Naive thymus-derived CD4-positive, alpha-beta T cell (primary cell): ENCODE measurements at regions of chr11 and their contacts with region 1.

Region 1: DNA sequence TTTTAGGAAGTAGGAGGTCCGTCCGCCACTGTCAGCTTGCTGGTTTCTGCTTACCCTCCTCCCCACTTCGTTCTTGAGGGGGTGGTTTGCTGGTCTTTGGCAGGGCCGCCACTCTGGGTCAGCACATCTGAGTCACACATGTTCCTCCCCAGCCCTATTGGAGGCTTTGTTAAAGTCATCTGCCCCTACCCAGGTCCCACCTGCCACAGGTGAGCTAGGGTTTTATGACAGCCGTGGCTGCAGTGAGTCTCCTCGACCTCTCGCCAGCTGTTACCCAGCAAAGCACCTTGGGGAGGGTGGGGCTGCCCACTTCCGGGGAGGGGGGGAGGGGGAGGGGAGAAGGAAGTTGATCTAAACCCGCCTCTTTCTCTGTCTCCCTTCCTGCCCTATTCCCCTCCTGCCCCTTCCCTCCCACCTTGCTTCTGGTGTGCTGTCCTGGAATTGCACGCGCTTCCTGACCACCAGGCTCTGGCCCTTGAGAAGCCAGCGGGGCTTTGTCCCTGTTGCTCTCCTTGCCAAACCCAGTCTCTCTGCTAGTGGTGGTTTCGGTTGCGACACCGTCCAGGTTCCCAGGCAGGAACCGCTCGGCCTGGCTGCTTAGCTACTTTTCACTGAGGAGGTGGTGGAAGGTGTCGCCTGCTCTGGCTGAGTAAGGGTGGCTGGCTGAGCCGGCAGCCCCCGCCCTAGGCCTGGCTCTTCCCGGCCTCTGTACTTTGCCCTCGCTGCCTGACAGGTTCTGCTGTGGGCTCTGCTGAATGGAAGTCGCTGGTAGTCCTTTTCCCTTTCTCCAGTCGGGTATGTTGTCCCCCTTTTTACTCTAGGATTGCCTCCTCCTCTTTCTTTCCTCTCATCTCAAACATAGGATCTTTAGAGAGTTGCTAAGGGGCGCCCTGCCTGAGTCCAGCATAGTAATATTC is 28.5 kb downstream of the RCOR2 start:
- DNase-seq: peak; percentile 30 to 75 (median 72)
- ATAC-seq: peak; percentile 89
- H3K4me3 ChIP-seq: peak overlapping the region; percentile 80
- H3K4me3 Mint-ChIP-seq: peak overlapping the region; percentile 89 to 98 (median 95)
- H3K27ac ChIP-seq: peak overlapping the region; percentile 78
- H3K27ac Mint-ChIP-seq: peak overlapping the region; percentile 85 to 98 (median 94)
- H3K4me1 ChIP-seq: peaks cover 49 to 65% of the 10 kb centered on the region in 2 donors
- H3K4me1 Mint-ChIP-seq: peaks cover 58 to 86% (median 82%) of the 10 kb centered on the region in 7 donors
- H3K27me3 ChIP-seq: no peaks in the 10 kb centered on the region
- H3K27me3 Mint-ChIP-seq: no peaks in the 10 kb centered on the region

Region 2: DNA sequence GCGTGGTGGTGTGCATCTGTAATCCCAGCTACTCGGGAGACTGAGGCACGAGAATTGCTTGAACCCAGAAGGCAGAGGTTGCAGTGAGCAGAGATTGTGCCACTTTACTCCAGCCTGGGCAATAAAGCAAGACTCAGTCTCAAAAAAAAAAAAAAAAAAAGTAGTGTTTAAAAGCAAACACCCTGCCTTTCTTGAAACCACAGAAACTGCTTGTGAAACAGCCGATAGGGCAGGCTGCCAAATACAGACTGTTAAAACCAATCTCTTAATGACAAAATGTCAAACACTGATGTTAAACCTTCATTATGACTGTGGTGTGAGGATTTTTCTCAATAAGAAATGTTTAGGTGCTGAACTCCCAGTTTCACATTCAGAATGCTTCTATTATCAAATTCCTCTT is 22.2 kb before region 1 on chr11:
- CTCF ChIA-PET with region 1: interaction called, 5 read pairs
- POLR2A ChIA-PET with region 1: interaction called, 23 read pairs
- intact Hi-C with region 1: loop called in 1 of 2 experiments (anchors 1 kb)
- DNase-seq: peak; percentile 29 to 87 (median 80)
- ATAC-seq: peak; percentile 83
- H3K4me3 ChIP-seq: no peak overlapping the region
- H3K4me3 Mint-ChIP-seq: peak overlapping the region; percentile 56 to 81 (median 75)
- H3K27ac ChIP-seq: peak overlapping the region; percentile 22
- H3K27ac Mint-ChIP-seq: peak overlapping the region; percentile 63 to 94 (median 83)
- H3K4me1 ChIP-seq: peaks cover 73% of the 10 kb centered on the region in 2 donors
- H3K4me1 Mint-ChIP-seq: peaks cover 69 to 85% (median 75%) of the 10 kb centered on the region in 7 donors
- H3K27me3 ChIP-seq: no peaks in the 10 kb centered on the region
- H3K27me3 Mint-ChIP-seq: no peaks in the 10 kb centered on the region

Region 3: GRCh38 chr11:63871962-63872799 is 16.2 kb before region 1 on chr11:
- CTCF ChIA-PET with region 1: interaction called, 13 read pairs
- POLR2A ChIA-PET with region 1: interaction called, 51 read pairs
- intact Hi-C with region 1: loop called in 1 of 2 experiments (anchors 1 kb)
- DNase-seq: peak in 3 of 9 donors; percentile 11 to 44 (median 23)
- ATAC-seq: peak; percentile 96
- H3K4me3 ChIP-seq: no peak overlapping the region
- H3K4me3 Mint-ChIP-seq: peak overlapping the region; percentile 45 to 72 (median 62)
- H3K27ac ChIP-seq: no peak overlapping the region
- H3K27ac Mint-ChIP-seq: peak overlapping the region in 7 of 9 donors; percentile 8 to 70 (median 41)
- H3K4me1 ChIP-seq: peaks cover 56 to 62% of the 10 kb centered on the region in 2 donors
- H3K4me1 Mint-ChIP-seq: peaks cover 58 to 88% (median 83%) of the 10 kb centered on the region in 7 donors
- H3K27me3 ChIP-seq: no peaks in the 10 kb centered on the region
- H3K27me3 Mint-ChIP-seq: no peaks in the 10 kb centered on the region

Region 4: GRCh38 chr11:63916837-63917691 is 28.6 kb after region 1 on chr11 and contains the start of gene RCOR2:
- CTCF ChIA-PET with region 1: no interaction called
- POLR2A ChIA-PET with region 1: interaction called, 3 read pairs
- intact Hi-C with region 1: loop called in 1 of 2 experiments (anchors 1 kb)
- DNase-seq: peak; percentile 26 to 62 (median 54)
- ATAC-seq: peak; percentile 69
- H3K4me3 ChIP-seq: peak within 1 kb of the TSS; percentile 62
- H3K4me3 Mint-ChIP-seq: peak within 1 kb of the TSS; percentile 73 to 91 (median 83)
- H3K27ac ChIP-seq: no peak within 1 kb of the TSS
- H3K27ac Mint-ChIP-seq: peak within 1 kb of the TSS in 3 of 9 donors; percentile 36 to 64 (median 42)
- H3K4me1 ChIP-seq: peaks cover 8 to 20% of the 10 kb centered on the region in 2 donors
- H3K4me1 Mint-ChIP-seq: peaks cover 0 to 18% (median 15%) of the 10 kb centered on the region in 7 donors
- H3K27me3 ChIP-seq: no peaks in the 10 kb centered on the region
- H3K27me3 Mint-ChIP-seq: peaks cover 0 to 22% (median 0%) of the 10 kb centered on the region in 5 donors
- total RNA-seq, gene RCOR2: 0.07 TPM in 1 of 5 experiments, not detected in the others

Region 5: DNA sequence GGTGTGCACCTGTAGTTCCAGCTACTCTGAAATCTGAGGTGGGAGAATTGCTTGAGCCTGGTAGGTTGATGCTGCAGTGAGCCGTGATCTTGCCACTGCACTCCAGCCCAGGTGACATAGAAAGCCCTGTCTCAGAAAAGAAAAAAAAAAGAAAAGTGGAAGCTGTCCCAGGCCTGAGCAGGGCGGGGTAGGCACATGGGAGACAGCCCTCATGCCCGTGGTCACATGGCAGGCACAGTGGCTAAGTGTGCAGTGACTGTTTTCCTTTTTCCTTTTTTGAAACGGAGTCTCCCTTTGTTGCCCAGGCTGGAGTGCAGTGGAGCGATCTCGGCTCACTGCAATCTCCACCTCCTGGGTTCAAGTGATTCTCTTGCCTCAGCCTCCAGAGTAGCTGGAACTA is 105.6 kb after region 1 on chr11:
- CTCF ChIA-PET with region 1: no interaction called
- POLR2A ChIA-PET with region 1: no interaction called
- intact Hi-C with region 1: no loop called
- DNase-seq: no peak
- ATAC-seq: peak; percentile 30
- H3K4me3 ChIP-seq: no peak overlapping the region
- H3K4me3 Mint-ChIP-seq: no peak overlapping the region
- H3K27ac ChIP-seq: no peak overlapping the region
- H3K27ac Mint-ChIP-seq: no peak overlapping the region
- H3K4me1 ChIP-seq: no peaks in the 10 kb centered on the region
- H3K4me1 Mint-ChIP-seq: peaks cover 9 to 28% (median 15%) of the 10 kb centered on the region in 7 donors
- H3K27me3 ChIP-seq: no peaks in the 10 kb centered on the region
- H3K27me3 Mint-ChIP-seq: no peaks in the 10 kb centered on the region

Region 6: DNA sequence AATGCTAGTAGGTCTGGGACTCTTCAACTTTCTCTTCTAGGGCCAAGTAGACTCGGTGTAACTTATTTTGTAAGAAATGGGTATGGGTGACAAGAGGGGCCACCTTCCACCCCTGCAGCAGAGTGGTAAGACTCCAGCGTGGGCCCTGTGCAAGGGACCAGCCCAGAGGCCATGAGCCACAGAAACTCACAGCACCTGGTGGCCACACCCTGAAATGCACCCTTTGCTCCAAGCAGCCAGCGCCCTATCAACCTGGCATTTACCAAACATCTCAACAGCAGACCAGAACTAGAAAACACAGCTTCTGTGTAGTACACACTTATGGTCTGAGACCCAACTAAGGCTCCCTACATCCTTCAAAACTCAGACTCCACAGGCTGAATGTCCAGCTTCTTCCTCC is 1189.7 kb after region 1 on chr11:
- CTCF ChIA-PET with region 1: no interaction called
- POLR2A ChIA-PET with region 1: no interaction called
- intact Hi-C with region 1: no loop called
- DNase-seq: peak; percentile 47 to 71 (median 64)
- ATAC-seq: peak; percentile 97
- H3K4me3 ChIP-seq: no peak overlapping the region
- H3K4me3 Mint-ChIP-seq: peak overlapping the region in 1 of 10 donors; percentile 48
- H3K27ac ChIP-seq: no peak overlapping the region
- H3K27ac Mint-ChIP-seq: peak overlapping the region; percentile 9 to 83 (median 63)
- H3K4me1 ChIP-seq: no peaks in the 10 kb centered on the region
- H3K4me1 Mint-ChIP-seq: peaks cover 3 to 48% (median 7%) of the 10 kb centered on the region in 7 donors
- H3K27me3 ChIP-seq: no peaks in the 10 kb centered on the region
- H3K27me3 Mint-ChIP-seq: no peaks in the 10 kb centered on the region